ENCODE measurements at regions of chr3 and their contacts with region 1.

Region 1: GRCh38 chr3:185270262-185270955 is 16.6 kb upstream of the EHHADH start:
- DNase-seq: no peak
- H3K4me3 ChIP-seq: no peak overlapping the region
- CTCF ChIP-seq: peak; percentile 65

Region 2: GRCh38 chr3:185200635-185201034 is 69.8 kb before region 1 on chr3:
- in situ Hi-C with region 1: loop called (anchors 5 kb)
- DNase-seq: peak; percentile 28
- H3K4me3 ChIP-seq: no peak overlapping the region
- CTCF ChIP-seq: no peak